CD4-positive, alpha-beta T cell (primary cell): ENCODE measurements at regions of chr22 and their contacts with region 1.

Region 1: GRCh38 chr22:20430720-20431510 is 6.7 kb downstream of the SCARF2 start:
- DNase-seq: peak; percentile 45 to 88 (median 57)
- ATAC-seq: peak; percentile 64
- H3K4me3 ChIP-seq: peak overlapping the region; percentile 78
- H3K4me3 Mint-ChIP-seq: peak overlapping the region; percentile 79
- H3K27ac ChIP-seq: no peak overlapping the region
- H3K27ac Mint-ChIP-seq: no peak overlapping the region
- H3K4me1 ChIP-seq: peaks cover 46% of the 10 kb centered on the region
- H3K4me1 Mint-ChIP-seq: peaks cover 17% of the 10 kb centered on the region
- H3K27me3 ChIP-seq: peaks cover 34 to 40% of the 10 kb centered on the region in 2 experiments
- H3K27me3 Mint-ChIP-seq: peaks cover 53% of the 10 kb centered on the region
- CTCF ChIP-seq: peak; percentile 54

Region 2: DNA sequence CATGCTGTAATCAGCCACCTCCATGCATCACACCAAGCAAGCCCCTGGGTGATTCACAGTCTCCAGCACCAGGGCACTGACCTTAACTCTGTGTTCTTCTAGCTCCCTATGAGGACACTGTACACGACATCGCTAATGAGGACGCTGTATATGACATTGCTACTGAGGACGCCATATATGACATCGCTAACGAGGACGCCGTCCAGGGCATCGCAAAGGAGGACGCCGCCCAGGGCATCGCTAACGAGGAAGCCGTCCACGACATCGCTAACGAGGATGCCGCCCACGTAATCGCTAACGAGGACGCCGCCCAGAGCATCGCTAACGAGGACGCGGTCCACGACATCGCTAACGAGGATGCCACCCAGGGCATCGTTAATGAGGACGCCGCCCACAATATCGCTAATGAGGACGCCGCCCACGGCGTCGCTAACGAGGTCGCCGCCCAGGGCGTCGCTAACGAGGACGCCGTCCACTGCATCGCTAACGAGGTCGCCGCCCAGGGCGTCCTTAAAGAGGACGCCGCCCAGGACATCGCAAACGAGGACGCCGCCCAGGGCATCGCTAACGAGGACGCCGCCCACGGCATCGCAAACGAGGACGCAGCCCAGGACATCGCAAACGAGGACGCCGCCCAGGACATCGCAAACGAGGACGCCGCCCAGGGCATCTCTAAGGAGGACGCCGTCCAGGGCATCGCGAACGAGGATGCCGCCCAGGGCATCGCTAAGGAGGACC is 76.5 kb before region 1 on chr22:
- CTCF ChIA-PET with region 1: no interaction called
- POLR2A ChIA-PET with region 1: no interaction called
- intact Hi-C with region 1: no loop called
- DNase-seq: peak in 1 of 14 experiments; percentile 13
- ATAC-seq: no peak
- H3K4me3 ChIP-seq: no peak overlapping the region
- H3K4me3 Mint-ChIP-seq: no peak overlapping the region
- H3K27ac ChIP-seq: no peak overlapping the region
- H3K27ac Mint-ChIP-seq: no peak overlapping the region
- H3K4me1 ChIP-seq: no peaks in the 10 kb centered on the region
- H3K4me1 Mint-ChIP-seq: no peaks in the 10 kb centered on the region
- H3K27me3 ChIP-seq: no peaks in the 10 kb centered on the region
- H3K27me3 Mint-ChIP-seq: no peaks in the 10 kb centered on the region
- CTCF ChIP-seq: no peak

Region 3: GRCh38 chr22:20456064-20456721 is 25.3 kb after region 1 on chr22:
- CTCF ChIA-PET with region 1: interaction called, 5 read pairs
- POLR2A ChIA-PET with region 1: interaction called, 6 read pairs
- intact Hi-C with region 1: loop called in 1 of 2 experiments (anchors 1 kb)
- DNase-seq: peak; percentile 60 to 90 (median 70)
- ATAC-seq: peak; percentile 100
- H3K4me3 ChIP-seq: no peak overlapping the region
- H3K4me3 Mint-ChIP-seq: no peak overlapping the region
- H3K27ac ChIP-seq: no peak overlapping the region
- H3K27ac Mint-ChIP-seq: no peak overlapping the region
- H3K4me1 ChIP-seq: peaks cover 26% of the 10 kb centered on the region
- H3K4me1 Mint-ChIP-seq: peaks cover 39% of the 10 kb centered on the region
- H3K27me3 ChIP-seq: no peaks in the 10 kb centered on the region
- H3K27me3 Mint-ChIP-seq: no peaks in the 10 kb centered on the region
- CTCF ChIP-seq: peak; percentile 89

Region 4: DNA sequence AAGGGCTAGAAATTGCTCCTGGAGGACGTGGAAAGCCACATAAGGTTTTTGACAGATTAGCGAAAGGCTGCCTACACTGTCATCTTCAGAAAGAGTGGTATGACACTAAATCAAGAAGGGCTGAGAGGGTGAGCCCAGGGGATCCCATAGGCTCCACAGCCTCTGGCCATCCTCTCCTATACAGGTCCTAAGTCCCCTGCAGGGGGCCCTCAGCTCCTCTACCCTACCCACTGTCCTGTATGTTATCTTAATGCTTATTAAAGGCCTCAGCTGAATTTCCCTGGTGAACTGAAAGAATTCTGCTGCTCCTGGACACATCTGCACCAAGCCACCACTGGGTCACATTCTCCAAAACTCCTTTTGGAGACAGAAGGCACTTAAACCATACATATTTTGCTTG is 56.8 kb after region 1 on chr22:
- CTCF ChIA-PET with region 1: no interaction called
- POLR2A ChIA-PET with region 1: no interaction called
- intact Hi-C with region 1: no loop called
- DNase-seq: no peak
- ATAC-seq: no peak
- H3K4me3 ChIP-seq: no peak overlapping the region
- H3K4me3 Mint-ChIP-seq: no peak overlapping the region
- H3K27ac ChIP-seq: no peak overlapping the region
- H3K27ac Mint-ChIP-seq: no peak overlapping the region
- H3K4me1 ChIP-seq: peaks cover 37% of the 10 kb centered on the region
- H3K4me1 Mint-ChIP-seq: peaks cover 57% of the 10 kb centered on the region
- H3K27me3 ChIP-seq: no peaks in the 10 kb centered on the region
- H3K27me3 Mint-ChIP-seq: no peaks in the 10 kb centered on the region
- CTCF ChIP-seq: no peak